ENCODE measurements at regions of chr15 and their contacts with region 1.

Region 1: GRCh38 chr15:63112871-63113270 is 8.8 kb upstream of the LACTB start:
- DNase-seq: no peak
- H3K4me3 ChIP-seq: no peak overlapping the region
- H3K27ac ChIP-seq: no peak overlapping the region
- H3K4me1 ChIP-seq: no peaks in the 10 kb centered on the region
- H3K27me3 ChIP-seq: no peaks in the 10 kb centered on the region
- CTCF ChIP-seq: no peak
- POLR2A ChIP-seq: no peak

Region 2: DNA sequence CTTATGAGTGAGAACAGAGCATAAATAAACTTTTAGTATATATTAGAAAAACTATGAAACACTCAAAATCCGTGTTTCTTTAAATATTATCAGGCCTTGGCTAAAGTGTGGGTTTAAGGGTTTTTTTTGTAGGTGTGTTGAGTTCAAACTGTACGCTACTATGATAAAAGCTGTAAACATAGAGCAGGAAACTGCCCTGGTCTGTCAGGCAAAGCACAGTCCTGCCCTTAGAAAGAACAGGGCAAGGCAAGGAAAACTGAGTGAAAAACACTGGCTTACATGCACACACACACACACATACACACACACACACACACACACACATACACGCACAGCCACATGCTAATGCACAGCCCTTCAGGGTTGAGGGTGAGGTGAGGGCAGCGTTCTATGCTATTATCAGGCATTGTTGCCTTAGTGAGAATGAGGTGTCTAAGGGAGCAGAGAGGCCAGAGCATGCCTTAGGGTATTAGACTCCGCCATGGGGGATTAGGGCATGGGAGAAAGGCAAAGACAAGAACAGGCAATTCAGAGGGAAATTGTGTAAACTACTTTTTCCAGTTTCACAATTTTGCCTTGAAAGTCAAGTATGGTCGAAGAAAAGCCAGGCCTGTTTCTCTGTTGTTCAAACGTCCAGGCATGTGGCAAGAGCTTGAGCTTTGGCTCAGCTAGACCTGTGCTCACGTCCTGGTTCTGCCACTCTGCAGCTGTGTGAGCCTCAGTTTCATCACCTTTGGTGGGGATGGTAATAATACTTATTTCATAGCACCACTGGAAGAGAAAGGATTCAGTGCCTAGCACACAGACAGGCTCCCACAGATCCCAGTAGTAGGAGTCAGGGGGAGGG is 106.6 kb before region 1 on chr15:
- intact Hi-C with region 1: loop called (anchors 2 kb)
- DNase-seq: no peak
- H3K4me3 ChIP-seq: no peak overlapping the region
- H3K27ac ChIP-seq: no peak overlapping the region
- H3K4me1 ChIP-seq: no peaks in the 10 kb centered on the region
- H3K27me3 ChIP-seq: no peaks in the 10 kb centered on the region
- CTCF ChIP-seq: no peak
- POLR2A ChIP-seq: no peak

Region 3: GRCh38 chr15:63089260-63090043 is 23.4 kb before region 1 on chr15:
- intact Hi-C with region 1: no loop called
- DNase-seq: no peak
- H3K4me3 ChIP-seq: no peak overlapping the region
- H3K27ac ChIP-seq: no peak overlapping the region
- H3K4me1 ChIP-seq: no peaks in the 10 kb centered on the region
- H3K27me3 ChIP-seq: no peaks in the 10 kb centered on the region
- CTCF ChIP-seq: no peak
- POLR2A ChIP-seq: no peak

Region 4: DNA sequence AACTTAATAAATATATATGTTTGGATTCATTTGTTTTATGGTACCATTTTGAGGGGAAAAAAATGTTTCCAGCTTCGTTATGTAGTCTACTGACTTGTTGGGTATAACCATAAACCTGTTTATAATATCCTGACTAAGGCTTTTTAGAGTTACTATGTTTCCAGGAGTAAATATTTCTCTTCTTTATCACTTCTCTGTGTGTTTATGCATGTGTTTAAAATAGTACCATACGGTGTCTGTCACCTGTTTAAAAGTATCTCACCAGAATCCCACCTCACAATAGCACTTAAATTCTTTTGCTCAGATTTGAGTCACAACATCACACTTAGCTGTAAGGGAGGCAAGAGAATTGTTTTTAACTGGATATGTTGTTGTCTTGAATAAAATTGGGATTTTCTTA is 23.9 kb after region 1 on chr15:
- intact Hi-C with region 1: no loop called
- DNase-seq: no peak
- H3K4me3 ChIP-seq: no peak overlapping the region
- H3K27ac ChIP-seq: no peak overlapping the region
- H3K4me1 ChIP-seq: no peaks in the 10 kb centered on the region
- H3K27me3 ChIP-seq: no peaks in the 10 kb centered on the region
- CTCF ChIP-seq: no peak
- POLR2A ChIP-seq: no peak

Region 5: GRCh38 chr15:63752075-63752684 is 639.3 kb after region 1 on chr15:
- intact Hi-C with region 1: no loop called
- DNase-seq: no peak
- H3K4me3 ChIP-seq: no peak overlapping the region
- H3K27ac ChIP-seq: no peak overlapping the region
- H3K4me1 ChIP-seq: no peaks in the 10 kb centered on the region
- H3K27me3 ChIP-seq: no peaks in the 10 kb centered on the region
- CTCF ChIP-seq: peak; percentile 73 to 86 (median 85)
- POLR2A ChIP-seq: no peak

Measured in breast epithelium (tissue), 4 donors.